ENCODE measurements at regions of chr5 and their contacts with region 1.

Region 1: DNA sequence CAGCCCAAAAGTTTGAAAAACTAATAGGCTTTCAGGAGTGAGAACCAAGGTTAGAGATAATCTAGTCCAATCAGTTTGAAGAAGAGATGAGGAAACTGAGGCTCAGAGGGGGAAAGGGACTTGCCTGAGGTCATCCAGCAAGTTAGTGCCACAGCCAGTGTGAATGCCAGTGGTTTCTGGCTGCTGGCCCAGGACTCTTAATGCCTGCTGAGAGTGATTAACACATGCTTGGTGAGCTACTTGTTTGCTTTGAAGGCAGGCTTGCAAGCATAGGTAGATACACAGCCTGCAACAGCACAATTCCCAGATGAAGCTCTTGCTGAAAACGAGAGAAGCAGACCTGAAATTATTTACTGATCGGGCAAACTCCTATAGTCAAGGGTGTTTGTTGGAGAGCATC is 591.6 kb upstream of the SGCD start:
- DNase-seq: peak; percentile 61 to 65
- ATAC-seq: peak; percentile 57 to 79
- H3K4me3 ChIP-seq: no peak overlapping the region
- H3K27ac ChIP-seq: peak overlapping the region in 3 of 4 donors; percentile 68 to 77 (median 76)
- H3K4me1 ChIP-seq: peaks cover 51 to 61% of the 10 kb centered on the region in 2 donors
- H3K27me3 ChIP-seq: no peaks in the 10 kb centered on the region
- CTCF ChIP-seq: no peak
- POLR2A ChIP-seq: no peak

Region 2: GRCh38 chr5:155753943-155754581 is 18.7 kb after region 1 on chr5:
- in situ Hi-C with region 1: no loop called
- intact Hi-C with region 1: loop called (anchors 2 kb)
- DNase-seq: no peak
- ATAC-seq: peak; percentile 66 to 82
- H3K4me3 ChIP-seq: no peak overlapping the region
- H3K27ac ChIP-seq: peak overlapping the region; percentile 39 to 64 (median 54)
- H3K4me1 ChIP-seq: peaks cover 4 to 8% of the 10 kb centered on the region in 2 donors
- H3K27me3 ChIP-seq: no peaks in the 10 kb centered on the region
- CTCF ChIP-seq: no peak
- POLR2A ChIP-seq: no peak